Left cardiac atrium (tissue), 4 donors: ENCODE measurements at regions of chr2 and their contacts with region 1.

Region 1: DNA sequence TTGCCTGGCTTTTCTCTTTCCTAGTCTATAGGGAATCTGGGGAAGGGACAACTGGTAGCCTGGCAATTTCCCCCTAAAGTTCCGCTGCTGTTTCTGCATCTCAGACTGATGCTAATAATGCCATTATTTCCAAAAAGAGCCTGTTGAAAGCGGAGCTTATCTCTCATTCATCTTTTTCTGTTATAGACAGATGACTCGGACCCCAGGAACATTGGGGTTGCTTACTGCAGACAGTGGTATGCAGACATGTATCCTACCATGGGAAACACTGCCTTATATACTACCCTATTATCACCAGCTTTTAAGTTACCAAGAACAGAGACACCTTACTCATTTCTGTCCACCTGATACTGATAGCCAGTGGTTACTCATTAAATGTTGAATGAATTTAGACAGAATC is 15.3 kb downstream of the ETAA1 start:
- DNase-seq: no peak
- ATAC-seq: no peak

Region 2: DNA sequence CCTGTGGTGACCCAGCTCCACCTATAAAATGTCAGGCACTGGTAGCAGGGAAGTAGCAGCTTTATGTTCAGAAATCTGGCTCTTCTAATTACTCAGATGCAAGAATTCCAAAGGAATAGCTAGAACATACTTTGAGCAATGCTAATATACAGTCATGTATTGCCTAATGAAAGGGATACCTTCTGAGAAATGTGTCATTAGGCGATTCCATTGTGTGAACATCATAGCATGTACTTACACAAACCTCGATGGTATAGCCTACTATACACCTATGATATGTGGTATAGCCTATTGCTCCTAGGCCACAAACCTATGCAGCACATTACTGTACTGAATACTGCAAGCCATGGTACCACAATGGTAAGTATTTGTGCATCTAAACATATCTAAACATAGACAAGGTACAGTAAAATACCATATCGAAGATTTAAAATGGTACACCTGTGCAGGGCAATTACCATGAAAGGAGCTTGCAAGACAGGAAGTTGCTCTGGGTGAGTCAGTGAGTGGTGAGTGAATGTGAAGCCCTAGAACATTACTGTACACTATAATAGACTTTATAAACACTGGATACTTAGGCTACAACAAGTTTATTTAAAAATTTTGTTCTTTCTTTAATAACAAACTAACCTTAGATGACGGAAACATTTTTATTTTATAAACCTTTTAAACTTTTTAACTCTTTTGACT is 65.6 kb before region 1 on chr2:
- intact Hi-C with region 1: loop called in 1 of 2 experiments (anchors 10 kb)
- DNase-seq: no peak
- ATAC-seq: no peak